ENCODE measurements at regions of chr4 and their contacts with region 1.

Region 1: GRCh38 chr4:124541652-124542420 is 170.7 kb downstream of the ANKRD50 start:
- DNase-seq: no peak
- H3K4me3 ChIP-seq: no peak overlapping the region
- H3K27ac ChIP-seq: no peak overlapping the region
- H3K4me1 ChIP-seq: no peaks in the 10 kb centered on the region
- H3K27me3 ChIP-seq: no peaks in the 10 kb centered on the region
- CTCF ChIP-seq: no peak

Region 2: GRCh38 chr4:124304941-124305340 is 236.9 kb before region 1 on chr4:
- CTCF ChIA-PET with region 1: no interaction called
- POLR2A ChIA-PET with region 1: no interaction called
- intact Hi-C with region 1: no loop called
- DNase-seq: no peak
- H3K4me3 ChIP-seq: no peak overlapping the region
- H3K27ac ChIP-seq: no peak overlapping the region
- H3K4me1 ChIP-seq: no peaks in the 10 kb centered on the region
- H3K27me3 ChIP-seq: no peaks in the 10 kb centered on the region
- CTCF ChIP-seq: no peak

Region 3: DNA sequence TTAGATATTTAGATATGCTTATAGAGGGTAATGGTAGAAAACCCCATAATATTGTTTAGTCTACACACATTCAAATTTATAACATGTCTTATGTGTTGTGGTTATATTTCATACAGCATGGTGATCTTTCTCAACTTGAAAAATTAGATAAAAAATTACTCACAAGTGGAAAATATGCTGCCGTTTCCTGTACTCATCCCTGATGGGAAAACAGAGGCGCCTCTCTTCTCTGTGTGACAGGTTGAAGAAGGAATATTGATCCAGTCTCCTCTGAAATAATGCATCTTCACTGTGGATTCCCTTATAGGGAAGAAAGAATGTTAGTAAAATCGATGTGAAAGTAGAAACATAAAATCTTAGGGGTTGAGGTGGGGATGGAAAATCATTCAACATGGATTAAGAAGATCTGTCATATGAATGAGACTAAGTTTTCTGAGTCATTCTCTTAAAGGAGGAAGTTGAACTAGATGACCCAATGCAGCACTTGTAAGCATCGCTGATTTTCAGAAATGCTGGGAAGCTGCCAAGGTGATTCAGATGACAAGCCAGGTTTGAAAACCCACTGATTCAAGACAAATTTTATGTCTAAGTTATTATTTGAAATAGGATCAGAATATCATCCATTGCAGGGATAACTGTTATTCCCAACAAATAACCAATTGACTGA is 100.0 kb after region 1 on chr4:
- CTCF ChIA-PET with region 1: no interaction called
- POLR2A ChIA-PET with region 1: interaction called, 10 read pairs
- intact Hi-C with region 1: no loop called
- DNase-seq: peak; percentile 59 to 90
- H3K4me3 ChIP-seq: no peak overlapping the region
- H3K27ac ChIP-seq: peak overlapping the region; percentile 41
- H3K4me1 ChIP-seq: peaks cover 18% of the 10 kb centered on the region
- H3K27me3 ChIP-seq: no peaks in the 10 kb centered on the region
- CTCF ChIP-seq: no peak

Measured in PC-9 (cell line).